Gastrocnemius medialis (tissue), 4 donors: ENCODE measurements at regions of chr1 and their contacts with region 1.

Region 1: GRCh38 chr1:109341944-109342930 is 35.4 kb upstream of the MYBPHL start:
- DNase-seq: no peak
- ATAC-seq: no peak
- H3K4me3 ChIP-seq: no peak overlapping the region
- H3K27ac ChIP-seq: peak overlapping the region in 2 of 4 donors; percentile 11 to 85
- H3K4me1 ChIP-seq: peaks cover 7 to 18% of the 10 kb centered on the region in 2 donors
- H3K27me3 ChIP-seq: no peaks in the 10 kb centered on the region
- CTCF ChIP-seq: no peak
- POLR2A ChIP-seq: no peak

Region 2: DNA sequence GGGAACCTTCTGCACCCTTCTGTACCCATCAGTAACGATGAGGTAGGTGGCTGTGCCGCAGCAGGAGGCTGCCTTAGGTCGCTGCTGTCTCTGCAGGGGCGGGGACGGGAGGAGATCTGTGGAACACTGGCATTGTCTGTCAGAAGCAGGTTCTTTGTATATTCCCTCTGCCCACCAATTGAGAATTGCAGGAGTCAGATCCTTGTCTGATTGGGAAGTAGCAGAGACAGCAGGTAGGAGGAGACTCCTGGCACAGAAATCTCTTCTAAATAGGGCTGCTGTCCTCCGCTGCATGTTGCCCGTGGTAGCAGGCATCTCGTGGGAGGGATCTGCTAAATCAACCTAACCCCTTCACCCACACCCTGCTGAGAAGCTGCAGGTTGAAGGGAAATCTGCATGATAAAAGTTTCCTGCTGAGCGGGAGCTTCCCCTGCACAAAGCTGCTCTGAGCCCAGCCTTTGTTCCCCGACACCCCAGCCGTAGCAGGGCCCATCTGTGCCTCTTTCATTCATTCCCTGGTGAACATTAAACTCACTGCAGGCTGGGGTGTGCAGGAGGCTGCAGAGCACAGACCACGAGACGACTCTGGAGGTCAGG is 112.6 kb before region 1 on chr1:
- in situ Hi-C with region 1: no loop called
- intact Hi-C with region 1: no loop called
- DNase-seq: no peak
- ATAC-seq: no peak
- H3K4me3 ChIP-seq: no peak overlapping the region
- H3K27ac ChIP-seq: no peak overlapping the region
- H3K4me1 ChIP-seq: no peaks in the 10 kb centered on the region
- H3K27me3 ChIP-seq: no peaks in the 10 kb centered on the region
- CTCF ChIP-seq: no peak
- POLR2A ChIP-seq: no peak

Region 3: DNA sequence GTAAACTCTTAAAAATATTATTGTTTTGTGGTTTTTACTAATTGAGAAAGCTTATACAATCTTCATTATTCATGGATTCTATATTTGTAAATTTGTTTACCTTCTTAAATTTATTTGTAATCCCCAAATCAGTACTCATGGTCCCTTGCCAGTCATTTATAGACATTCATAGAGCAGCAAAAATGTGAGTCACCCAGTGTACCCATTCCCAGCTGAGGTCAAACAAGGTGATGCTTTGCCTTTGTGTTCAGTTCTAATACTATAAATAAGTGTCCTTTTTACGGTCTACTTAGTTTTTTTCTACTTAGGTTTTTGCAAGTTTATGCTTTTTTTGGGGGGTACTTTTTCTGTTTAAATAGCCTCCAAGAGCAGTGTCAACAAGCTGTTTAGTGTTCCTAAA is 19.4 kb after region 1 on chr1:
- in situ Hi-C with region 1: no loop called
- intact Hi-C with region 1: loop called (anchors 2 kb)
- DNase-seq: no peak
- ATAC-seq: peak; percentile 77 to 85
- H3K4me3 ChIP-seq: no peak overlapping the region
- H3K27ac ChIP-seq: peak overlapping the region; percentile 14 to 93 (median 46)
- H3K4me1 ChIP-seq: peaks cover 51% of the 10 kb centered on the region in 2 donors
- H3K27me3 ChIP-seq: no peaks in the 10 kb centered on the region
- CTCF ChIP-seq: no peak
- POLR2A ChIP-seq: no peak